Prostate gland (tissue), 2 donors: ENCODE measurements at regions of chr12 and their contacts with region 1.

Region 1: DNA sequence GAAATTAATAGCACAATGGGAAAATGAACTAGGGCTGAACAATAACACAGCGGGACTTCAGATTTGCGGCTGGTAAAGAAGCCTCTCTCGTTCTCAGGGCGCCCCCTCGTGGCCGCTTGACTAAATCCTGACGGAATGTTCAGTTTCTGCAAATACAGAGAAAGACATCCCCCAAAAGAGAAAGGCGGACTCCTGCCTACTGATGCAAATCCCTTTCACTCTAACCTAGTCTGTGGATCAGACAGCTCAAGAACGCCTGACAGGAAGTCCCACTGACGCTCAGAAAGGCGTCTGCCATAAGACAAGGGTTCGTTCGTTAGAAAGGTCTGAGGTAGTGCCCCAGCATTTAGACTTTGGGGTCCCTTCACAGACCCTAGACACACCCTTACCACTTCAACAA is 2.5 kb downstream of the NUAK1 start:
- DNase-seq: peak; percentile 92
- H3K4me3 ChIP-seq: peak overlapping the region; percentile 4 to 76
- H3K27ac ChIP-seq: peak overlapping the region in 1 of 2 donors; percentile 92
- H3K4me1 ChIP-seq: no peaks in the 10 kb centered on the region
- H3K27me3 ChIP-seq: no peaks in the 10 kb centered on the region
- CTCF ChIP-seq: peak; percentile 84 to 93 (median 88)
- POLR2A ChIP-seq: no peak

Region 2: DNA sequence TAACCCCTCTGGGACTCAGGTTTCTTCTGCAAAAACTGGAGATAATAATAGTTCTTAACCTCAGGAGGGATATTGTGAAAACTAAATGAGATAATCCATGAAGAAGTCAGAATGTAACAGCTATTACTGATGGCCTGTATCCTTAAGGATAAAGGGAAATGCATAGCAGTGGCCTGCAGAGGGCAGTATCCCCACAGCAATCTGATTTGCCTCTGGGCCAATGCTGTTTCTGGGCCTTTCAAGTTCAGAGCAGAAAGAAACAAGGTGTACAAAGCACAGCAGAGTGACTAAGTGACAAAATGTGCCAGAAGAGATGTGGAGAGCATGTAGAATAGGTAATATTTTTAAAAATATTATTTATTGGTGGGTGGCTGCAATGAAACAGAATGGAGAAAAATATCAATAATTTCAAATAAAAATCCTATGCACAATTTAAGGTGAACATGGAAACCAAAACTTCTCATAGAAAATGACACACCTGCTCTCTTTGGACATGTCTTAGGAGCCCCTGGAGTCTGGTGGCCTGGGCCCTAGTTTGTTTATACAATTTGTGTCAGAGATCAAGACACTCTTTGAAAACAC is 715.5 kb before region 1 on chr12:
- intact Hi-C with region 1: loop called (anchors 5 kb)
- DNase-seq: peak; percentile 71
- H3K4me3 ChIP-seq: no peak overlapping the region
- H3K27ac ChIP-seq: no peak overlapping the region
- H3K4me1 ChIP-seq: no peaks in the 10 kb centered on the region
- H3K27me3 ChIP-seq: no peaks in the 10 kb centered on the region
- CTCF ChIP-seq: peak; percentile 78 to 93 (median 91)
- POLR2A ChIP-seq: no peak

Region 3: DNA sequence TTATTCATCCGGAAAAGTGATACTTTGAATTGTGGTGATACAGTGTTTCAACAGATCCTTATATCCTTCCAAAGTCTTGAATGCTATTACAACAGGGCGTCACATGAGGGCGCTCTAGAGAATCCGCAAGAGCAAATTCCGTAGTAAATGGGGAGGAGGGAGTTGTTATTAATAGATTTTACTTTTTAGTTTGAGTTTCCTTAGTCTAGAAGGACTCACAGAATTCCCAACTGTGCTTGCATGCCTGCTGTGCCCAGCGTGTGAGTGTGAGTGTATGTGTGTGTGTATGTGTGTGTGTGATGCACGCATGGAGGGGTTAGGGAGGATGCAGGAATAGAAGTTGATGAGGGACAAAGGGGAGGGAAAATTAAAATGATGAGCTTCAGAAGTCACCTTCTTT is 430.5 kb before region 1 on chr12:
- intact Hi-C with region 1: loop called (anchors 1 kb)
- DNase-seq: peak; percentile 32
- H3K4me3 ChIP-seq: no peak overlapping the region
- H3K27ac ChIP-seq: no peak overlapping the region
- H3K4me1 ChIP-seq: no peaks in the 10 kb centered on the region
- H3K27me3 ChIP-seq: no peaks in the 10 kb centered on the region
- CTCF ChIP-seq: peak; percentile 24 to 62 (median 48)
- POLR2A ChIP-seq: no peak

Region 4: GRCh38 chr12:105775343-105775742 is 360.9 kb before region 1 on chr12:
- intact Hi-C with region 1: loop called (anchors 10 kb)
- DNase-seq: no peak
- H3K4me3 ChIP-seq: no peak overlapping the region
- H3K27ac ChIP-seq: no peak overlapping the region
- H3K4me1 ChIP-seq: no peaks in the 10 kb centered on the region
- H3K27me3 ChIP-seq: no peaks in the 10 kb centered on the region
- CTCF ChIP-seq: peak in 2 of 4 experiments; percentile 18
- POLR2A ChIP-seq: no peak

Region 5: GRCh38 chr12:105843986-105844760 is 292.1 kb before region 1 on chr12:
- intact Hi-C with region 1: loop called (anchors 10 kb)
- DNase-seq: no peak
- H3K4me3 ChIP-seq: no peak overlapping the region
- H3K27ac ChIP-seq: no peak overlapping the region
- H3K4me1 ChIP-seq: no peaks in the 10 kb centered on the region
- H3K27me3 ChIP-seq: peaks cover 2% of the 10 kb centered on the region
- CTCF ChIP-seq: no peak
- POLR2A ChIP-seq: no peak

Region 6: DNA sequence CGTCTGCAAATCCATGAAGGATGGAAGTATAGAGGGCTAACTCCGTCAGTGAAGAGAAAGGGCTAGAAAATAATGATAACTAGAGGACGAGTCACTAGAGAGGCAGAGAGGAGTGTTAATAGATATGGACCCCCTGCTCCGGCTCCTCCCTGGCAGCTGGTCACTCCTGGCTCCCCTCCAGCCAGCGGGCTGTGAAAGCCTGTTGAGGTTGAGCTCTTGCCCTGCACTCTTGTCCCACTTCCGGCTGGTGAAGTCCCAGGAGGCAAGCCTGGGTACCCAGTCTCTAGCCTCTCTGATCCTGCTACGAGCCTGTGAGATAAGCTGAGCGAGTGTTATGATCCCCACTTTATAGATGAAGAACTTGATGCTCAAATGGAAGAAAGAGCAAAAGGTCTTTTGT is 536.9 kb after region 1 on chr12:
- intact Hi-C with region 1: no loop called
- DNase-seq: no peak
- H3K4me3 ChIP-seq: no peak overlapping the region
- H3K27ac ChIP-seq: no peak overlapping the region
- H3K4me1 ChIP-seq: no peaks in the 10 kb centered on the region
- H3K27me3 ChIP-seq: no peaks in the 10 kb centered on the region
- CTCF ChIP-seq: no peak
- POLR2A ChIP-seq: no peak